H1 (cell line): ENCODE measurements at regions of chr2 and their contacts with region 1.

Region 1: DNA sequence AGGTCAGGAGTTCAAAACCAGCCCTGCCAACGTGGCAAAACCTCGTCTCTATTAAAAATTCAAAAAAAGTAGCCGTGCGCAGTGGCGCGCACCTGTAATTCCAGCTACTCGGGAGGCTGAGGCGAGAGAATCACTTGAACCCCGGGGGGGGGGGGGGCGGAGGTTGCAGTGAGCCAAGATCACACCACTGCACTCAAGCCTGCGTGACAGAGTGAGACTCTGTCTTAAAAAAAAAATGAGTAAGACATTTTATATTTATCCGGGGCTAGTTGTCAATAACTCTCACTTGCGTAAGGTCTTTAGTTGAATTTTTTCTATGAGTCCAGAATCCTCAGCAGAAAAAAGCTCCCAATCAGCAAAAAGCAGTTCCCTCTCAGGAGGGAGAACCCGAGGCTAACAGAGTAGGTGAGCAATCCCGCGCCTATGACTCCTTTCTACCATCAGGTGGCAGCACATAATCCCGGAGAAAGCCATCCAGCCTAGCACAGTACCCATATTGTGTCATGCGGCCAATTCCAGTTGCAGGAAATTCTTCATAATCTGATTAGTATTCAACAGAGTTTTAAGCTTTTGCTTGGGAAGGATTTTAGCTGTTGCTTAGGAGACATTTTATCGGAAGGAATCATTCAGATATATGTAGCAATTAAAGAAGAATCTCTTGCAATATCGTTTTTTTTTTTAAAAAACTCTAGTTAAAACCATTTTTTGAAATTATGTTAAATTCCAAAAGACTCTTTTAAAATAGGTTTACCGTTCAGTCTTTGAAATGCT is 11.9 kb upstream of the CRYGA start:
- DNase-seq: peak; percentile 36 to 82
- H3K4me3 ChIP-seq: no peak overlapping the region
- H3K27ac ChIP-seq: no peak overlapping the region
- H3K4me1 ChIP-seq: peaks cover 0 to 2% (median 2%) of the 10 kb centered on the region in 4 experiments; a peak in 2 of 7 replicates
- H3K27me3 ChIP-seq: no peaks in the 10 kb centered on the region
- CTCF ChIP-seq: peak; percentile 81 to 91 (median 87)
- EP300 ChIP-seq: no peak
- POLR2A ChIP-seq: no peak
- RAD21 ChIP-seq: peak; percentile 81 to 86

Region 2: GRCh38 chr2:207487650-207488311 is 687.5 kb before region 1 on chr2:
- CTCF ChIA-PET with region 1: no interaction called
- POLR2A ChIA-PET with region 1: no interaction called
- DNase-seq: no peak
- H3K4me3 ChIP-seq: no peak overlapping the region
- H3K27ac ChIP-seq: no peak overlapping the region
- H3K4me1 ChIP-seq: no peaks in the 10 kb centered on the region
- H3K27me3 ChIP-seq: no peaks in the 10 kb centered on the region
- CTCF ChIP-seq: no peak
- EP300 ChIP-seq: no peak
- POLR2A ChIP-seq: no peak
- RAD21 ChIP-seq: no peak; a peak in 1 of 4 replicates

Region 3: DNA sequence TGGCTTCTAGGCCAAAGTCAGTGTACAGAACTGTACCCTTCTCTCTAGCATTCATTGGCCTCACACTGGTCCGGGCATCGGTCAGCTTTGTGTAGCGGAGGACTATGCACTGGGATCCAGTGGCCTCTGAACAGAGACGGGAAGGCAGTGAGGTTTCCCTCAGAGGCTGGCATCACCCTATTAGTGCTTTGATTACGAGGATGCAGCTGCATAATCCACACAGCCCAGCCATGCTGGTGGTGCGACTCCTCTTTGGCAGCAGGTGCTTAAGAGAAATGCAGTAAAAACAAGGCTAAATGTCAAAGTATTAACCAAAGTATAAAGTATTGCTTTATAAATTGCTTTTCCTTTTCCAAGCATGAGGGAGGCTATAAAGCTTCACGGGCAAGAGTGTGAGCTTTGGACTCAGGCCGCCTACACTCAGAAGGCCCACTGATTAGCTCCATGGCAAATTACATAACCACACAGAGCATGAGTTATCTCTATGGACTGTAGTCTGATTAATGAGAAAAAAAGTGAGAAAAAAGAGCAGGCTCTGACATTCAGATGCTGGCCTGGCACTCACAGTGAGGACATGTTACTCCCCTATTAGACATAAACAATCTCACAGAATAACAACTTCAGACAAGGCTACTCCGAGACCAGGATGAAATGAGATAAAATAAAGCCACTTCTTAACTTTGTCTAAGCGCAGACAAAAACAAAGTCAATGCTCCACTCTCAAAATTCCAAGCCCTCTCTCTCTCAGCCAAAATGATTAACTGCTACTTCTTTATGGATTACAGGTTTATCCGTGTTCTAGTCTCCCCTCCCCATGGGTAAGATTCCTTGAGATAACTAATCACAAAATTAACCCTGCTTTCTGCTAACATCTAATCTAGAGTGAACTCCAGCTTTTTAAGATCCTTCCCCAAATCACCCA is 39.2 kb before region 1 on chr2:
- CTCF ChIA-PET with region 1: interaction called, 17 read pairs
- POLR2A ChIA-PET with region 1: interaction called, 3 read pairs
- DNase-seq: no peak
- H3K4me3 ChIP-seq: no peak overlapping the region
- H3K27ac ChIP-seq: no peak overlapping the region
- H3K4me1 ChIP-seq: no peaks in the 10 kb centered on the region
- H3K27me3 ChIP-seq: no peaks in the 10 kb centered on the region
- CTCF ChIP-seq: no peak
- EP300 ChIP-seq: no peak
- POLR2A ChIP-seq: no peak
- RAD21 ChIP-seq: no peak

Region 4: DNA sequence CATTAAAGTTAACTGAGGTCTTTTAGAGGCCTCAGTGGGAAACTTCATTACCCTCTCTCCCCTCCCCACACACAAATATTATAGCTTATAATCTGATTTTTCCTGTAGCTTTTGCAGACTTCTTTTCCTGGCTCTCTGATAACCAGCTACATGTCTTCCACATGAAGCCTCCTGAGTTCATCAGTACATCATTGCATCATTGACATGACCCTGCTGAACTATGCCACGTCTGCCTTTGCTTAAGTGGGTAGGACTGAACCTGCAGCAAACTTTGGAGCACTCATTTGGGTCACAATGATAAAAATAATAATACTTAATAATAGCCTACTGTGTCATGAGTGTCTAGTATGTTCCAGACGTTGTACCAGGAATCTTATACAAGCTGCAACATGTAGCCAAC is 18.8 kb before region 1 on chr2:
- CTCF ChIA-PET with region 1: interaction called, 29 read pairs
- POLR2A ChIA-PET with region 1: no interaction called
- DNase-seq: no peak
- H3K4me3 ChIP-seq: no peak overlapping the region
- H3K27ac ChIP-seq: no peak overlapping the region
- H3K4me1 ChIP-seq: no peaks in the 10 kb centered on the region
- H3K27me3 ChIP-seq: no peaks in the 10 kb centered on the region
- CTCF ChIP-seq: no peak
- EP300 ChIP-seq: no peak
- POLR2A ChIP-seq: no peak
- RAD21 ChIP-seq: no peak

Region 5: GRCh38 chr2:208201126-208201525 is 25.9 kb after region 1 on chr2:
- CTCF ChIA-PET with region 1: interaction called, 13 read pairs
- POLR2A ChIA-PET with region 1: interaction called, 6 read pairs
- DNase-seq: no peak
- H3K4me3 ChIP-seq: no peak overlapping the region
- H3K27ac ChIP-seq: no peak overlapping the region
- H3K4me1 ChIP-seq: no peaks in the 10 kb centered on the region
- H3K27me3 ChIP-seq: no peaks in the 10 kb centered on the region
- CTCF ChIP-seq: no peak
- EP300 ChIP-seq: no peak
- POLR2A ChIP-seq: no peak
- RAD21 ChIP-seq: no peak

Region 6: DNA sequence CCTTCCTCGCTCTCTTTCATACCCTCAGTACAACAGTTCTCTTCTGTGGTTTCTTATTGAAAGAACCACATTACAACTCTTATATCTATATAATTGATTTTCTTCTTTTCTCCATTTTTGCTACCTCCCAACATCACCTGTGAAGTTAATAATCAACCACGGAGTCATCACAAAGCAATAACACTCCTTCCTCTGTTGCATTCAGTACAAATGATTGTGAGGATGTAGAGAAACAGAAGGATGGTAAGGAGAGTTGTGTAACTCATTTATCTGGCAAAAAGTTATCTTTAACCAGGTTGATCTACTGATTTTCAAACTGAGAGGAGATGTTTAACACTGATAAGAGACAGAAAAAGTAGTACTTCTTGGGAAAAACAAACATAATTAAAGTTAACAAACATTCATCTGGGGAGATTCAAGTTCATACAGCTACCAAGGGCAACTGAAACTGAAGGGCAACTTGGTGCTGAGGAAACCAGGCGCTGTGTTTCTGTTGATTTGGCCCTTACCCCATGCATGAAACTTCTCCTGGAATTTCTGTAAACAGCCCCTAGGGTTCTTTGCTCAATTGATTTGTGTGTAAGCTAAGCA is 65.5 kb after region 1 on chr2:
- CTCF ChIA-PET with region 1: interaction called, 12 read pairs
- POLR2A ChIA-PET with region 1: interaction called, 4 read pairs
- DNase-seq: no peak
- H3K4me3 ChIP-seq: no peak overlapping the region
- H3K27ac ChIP-seq: no peak overlapping the region
- H3K4me1 ChIP-seq: no peaks in the 10 kb centered on the region
- H3K27me3 ChIP-seq: no peaks in the 10 kb centered on the region
- CTCF ChIP-seq: no peak
- EP300 ChIP-seq: no peak
- POLR2A ChIP-seq: no peak
- RAD21 ChIP-seq: no peak